GM10248 (cell line): ENCODE measurements at regions of chr3 and their contacts with region 1.

Region 1: DNA sequence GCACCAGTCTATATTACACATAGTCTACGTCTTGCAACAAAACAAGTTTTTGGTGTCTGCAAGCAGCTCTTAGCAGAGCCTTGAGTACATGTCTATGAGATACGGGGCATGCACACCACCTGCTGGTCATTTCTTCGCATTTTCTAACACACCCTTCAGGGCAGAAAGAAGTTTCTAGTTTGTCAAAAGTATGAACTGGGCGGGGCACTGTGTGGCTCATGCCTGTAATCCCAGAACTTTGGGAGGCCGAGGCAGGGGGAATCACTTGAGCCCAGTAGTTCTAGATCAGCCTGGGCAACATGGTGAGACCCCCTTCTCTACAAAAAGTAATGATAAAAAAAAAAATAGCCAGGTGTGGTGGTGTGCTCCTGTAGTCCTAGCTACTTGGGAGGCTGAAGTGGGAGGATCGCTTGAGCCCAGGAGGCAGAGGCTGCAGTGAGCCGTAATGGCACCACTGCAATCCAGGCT is 64.2 kb upstream of the ARL8B start:
- DNase-seq: peak; percentile 67
- CTCF ChIP-seq: peak; percentile 78

Region 2: DNA sequence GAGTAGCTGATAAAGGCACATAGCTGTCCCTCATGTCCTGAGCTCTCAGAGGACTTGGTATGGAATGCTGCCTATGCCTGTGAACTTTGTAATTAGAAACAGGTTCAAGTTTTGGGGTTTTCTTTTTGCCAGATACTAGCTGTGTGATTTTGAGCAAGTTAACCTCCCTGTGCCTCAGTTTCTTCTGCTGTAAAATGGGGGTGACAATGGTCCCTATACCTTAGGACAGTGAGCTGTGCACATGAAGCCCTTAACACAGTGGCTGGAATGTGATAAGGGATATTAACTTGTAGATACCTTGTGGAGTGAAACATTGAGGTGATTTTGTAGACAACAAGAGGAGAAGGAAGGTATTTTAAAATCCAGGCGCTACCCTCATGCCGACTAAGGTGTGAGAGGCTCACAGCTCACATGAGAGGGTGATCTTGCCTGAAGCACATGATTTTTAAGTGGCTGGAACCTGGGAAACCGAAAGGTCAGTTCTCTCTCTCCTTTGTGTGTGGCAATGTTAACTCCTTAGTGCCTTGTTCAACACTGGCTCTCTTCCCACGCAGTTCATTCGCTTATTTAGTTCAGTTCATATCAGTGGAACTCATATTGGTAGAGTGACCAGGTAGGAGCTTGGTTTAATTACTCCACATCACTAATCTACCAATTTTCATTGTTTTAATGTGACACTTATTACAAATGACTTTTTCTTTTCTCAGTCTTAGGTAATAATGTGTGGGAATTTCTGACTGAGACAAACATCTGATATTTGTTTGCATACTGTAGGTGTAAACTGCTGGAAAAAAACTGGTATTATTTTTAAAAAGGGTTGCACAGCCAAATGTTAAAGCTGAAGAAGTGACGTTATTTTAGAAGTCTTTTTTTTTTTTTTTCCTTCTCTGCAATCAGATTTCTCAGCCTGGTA is 328.6 kb before region 1 on chr3:
- CTCF ChIA-PET with region 1: interaction called, 14 read pairs
- POLR2A ChIA-PET with region 1: no interaction called
- DNase-seq: no peak
- CTCF ChIP-seq: no peak

Region 3: DNA sequence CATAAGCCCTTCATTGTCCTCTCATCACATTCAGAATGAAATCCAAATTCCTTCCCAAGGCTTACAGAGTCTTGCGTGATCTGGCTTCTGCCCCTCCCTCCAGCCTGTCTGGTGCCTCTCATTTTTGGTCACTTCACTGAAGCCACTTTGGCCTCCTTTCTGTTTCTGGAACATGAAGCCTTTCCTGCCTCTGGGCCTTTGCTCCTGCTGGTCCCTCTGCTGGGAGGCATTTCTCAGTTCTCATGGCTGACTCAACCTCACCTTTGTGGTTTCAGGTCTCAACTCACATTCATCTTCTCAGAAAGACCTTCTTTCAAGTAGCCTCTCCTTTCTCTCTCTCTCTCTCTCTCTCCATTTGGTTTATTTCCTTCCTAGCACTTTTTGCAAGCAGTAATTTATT is 122.5 kb before region 1 on chr3:
- CTCF ChIA-PET with region 1: no interaction called
- POLR2A ChIA-PET with region 1: no interaction called
- DNase-seq: no peak
- CTCF ChIP-seq: no peak

Region 4: GRCh38 chr3:5390221-5390620 is 332.3 kb after region 1 on chr3:
- CTCF ChIA-PET with region 1: no interaction called
- POLR2A ChIA-PET with region 1: no interaction called
- DNase-seq: no peak
- CTCF ChIP-seq: no peak